ENCODE measurements at regions of chr19 and their contacts with region 1.

Region 1: GRCh38 chr19:44051654-44052402 is at the start of gene ZNF223:
- DNase-seq: peak; percentile 96 to 97
- ATAC-seq: peak; percentile 99
- H3K4me3 ChIP-seq: peak within 1 kb of the TSS; percentile 54 to 83
- H3K27ac ChIP-seq: peak within 1 kb of the TSS in 1 of 2 donors; percentile 42
- H3K4me1 ChIP-seq: peaks cover 0 to 2% of the 10 kb centered on the region in 2 donors
- H3K27me3 ChIP-seq: no peaks in the 10 kb centered on the region
- total RNA-seq, gene ZNF223: 3.8 to 6.3 TPM

Region 2: GRCh38 chr19:44002566-44003460 is 49.0 kb before region 1 on chr19 and contains the start of gene ZNF230:
- intact Hi-C with region 1: loop called in 1 of 2 experiments (anchors 5 kb)
- DNase-seq: peak; percentile 93 to 94
- ATAC-seq: peak; percentile 99
- H3K4me3 ChIP-seq: peak within 1 kb of the TSS; percentile 83 to 86
- H3K27ac ChIP-seq: no peak within 1 kb of the TSS
- H3K4me1 ChIP-seq: peaks cover 0 to 3% of the 10 kb centered on the region in 2 donors
- H3K27me3 ChIP-seq: no peaks in the 10 kb centered on the region
- total RNA-seq, gene ZNF230: 4.2 to 6.0 TPM

Region 3: GRCh38 chr19:44025217-44025936 is 26.5 kb before region 1 on chr19 and contains the start of gene ZNF222:
- intact Hi-C with region 1: loop called in 1 of 2 experiments (anchors 2 kb)
- DNase-seq: peak; percentile 92 to 93
- ATAC-seq: peak; percentile 92
- H3K4me3 ChIP-seq: peak within 1 kb of the TSS; percentile 92
- H3K27ac ChIP-seq: peak within 1 kb of the TSS in 1 of 2 donors; percentile 26
- H3K4me1 ChIP-seq: no peaks in the 10 kb centered on the region
- H3K27me3 ChIP-seq: no peaks in the 10 kb centered on the region
- total RNA-seq, gene ZNF222: 4.1 to 4.4 TPM

Region 4: DNA sequence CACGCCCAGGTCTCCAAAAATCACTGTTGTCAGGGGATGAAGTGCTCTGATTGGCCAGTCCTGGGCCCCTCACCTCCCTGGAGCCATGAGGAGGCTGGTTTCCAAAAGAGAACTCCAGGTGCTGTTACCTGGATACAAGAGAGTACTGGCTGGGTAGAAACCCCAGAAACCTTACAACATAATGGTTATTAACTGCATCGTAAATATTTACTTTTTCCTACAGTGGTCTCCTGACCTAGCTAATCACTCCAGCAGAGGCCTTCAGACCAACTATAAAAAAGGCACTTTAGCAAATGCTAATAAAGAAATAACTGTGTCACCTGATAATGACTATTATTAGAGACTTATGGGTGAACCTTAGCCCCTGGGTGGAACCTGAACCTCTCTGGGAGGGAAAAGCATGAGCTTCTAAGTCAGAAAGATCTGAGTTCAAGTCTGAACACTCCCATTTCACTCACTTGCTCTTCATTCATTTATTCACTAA is 560.0 kb after region 1 on chr19:
- intact Hi-C with region 1: no loop called
- DNase-seq: no peak
- ATAC-seq: no peak
- H3K4me3 ChIP-seq: no peak overlapping the region
- H3K27ac ChIP-seq: no peak overlapping the region
- H3K4me1 ChIP-seq: no peaks in the 10 kb centered on the region
- H3K27me3 ChIP-seq: no peaks in the 10 kb centered on the region

Measured in aorta (tissue), 5 donors.